Calu3 (cell line): ENCODE measurements at regions of chr3 and their contacts with region 1.

Region 1: GRCh38 chr3:135918580-135918962 is 47.0 kb upstream of the PPP2R3A start:
- DNase-seq: no peak
- H3K4me3 Mint-ChIP-seq: no peak overlapping the region
- H3K27ac Mint-ChIP-seq: peak overlapping the region; percentile 40
- H3K4me1 Mint-ChIP-seq: peaks cover 36% of the 10 kb centered on the region
- H3K27me3 Mint-ChIP-seq: no peaks in the 10 kb centered on the region
- CTCF ChIP-seq: peak; percentile 83

Region 2: GRCh38 chr3:135860761-135861160 is 57.8 kb before region 1 on chr3:
- CTCF ChIA-PET with region 1: no interaction called
- intact Hi-C with region 1: no loop called
- DNase-seq: no peak
- H3K4me3 Mint-ChIP-seq: no peak overlapping the region
- H3K27ac Mint-ChIP-seq: no peak overlapping the region
- H3K4me1 Mint-ChIP-seq: no peaks in the 10 kb centered on the region
- H3K27me3 Mint-ChIP-seq: peaks cover 13% of the 10 kb centered on the region
- CTCF ChIP-seq: no peak

Region 3: GRCh38 chr3:135965506-135966270 is 47.1 kb after region 1 on chr3 and contains the start of gene PPP2R3A:
- CTCF ChIA-PET with region 1: interaction called, 38 read pairs
- intact Hi-C with region 1: loop called (anchors 1 kb)
- DNase-seq: peak; percentile 96
- H3K4me3 Mint-ChIP-seq: peak within 1 kb of the TSS; percentile 76
- H3K27ac Mint-ChIP-seq: peak within 1 kb of the TSS; percentile 73
- H3K4me1 Mint-ChIP-seq: peaks cover 39% of the 10 kb centered on the region
- H3K27me3 Mint-ChIP-seq: no peaks in the 10 kb centered on the region
- CTCF ChIP-seq: no peak
- total RNA-seq, gene PPP2R3A: 45.6 and 64.8 TPM in 2 replicates

Region 4: GRCh38 chr3:135992072-135992471 is 73.5 kb after region 1 on chr3:
- CTCF ChIA-PET with region 1: no interaction called
- intact Hi-C with region 1: loop called (anchors 1 kb)
- DNase-seq: no peak
- H3K4me3 Mint-ChIP-seq: no peak overlapping the region
- H3K27ac Mint-ChIP-seq: peak overlapping the region; percentile 85
- H3K4me1 Mint-ChIP-seq: peaks cover 37% of the 10 kb centered on the region
- H3K27me3 Mint-ChIP-seq: no peaks in the 10 kb centered on the region
- CTCF ChIP-seq: no peak

Region 5: DNA sequence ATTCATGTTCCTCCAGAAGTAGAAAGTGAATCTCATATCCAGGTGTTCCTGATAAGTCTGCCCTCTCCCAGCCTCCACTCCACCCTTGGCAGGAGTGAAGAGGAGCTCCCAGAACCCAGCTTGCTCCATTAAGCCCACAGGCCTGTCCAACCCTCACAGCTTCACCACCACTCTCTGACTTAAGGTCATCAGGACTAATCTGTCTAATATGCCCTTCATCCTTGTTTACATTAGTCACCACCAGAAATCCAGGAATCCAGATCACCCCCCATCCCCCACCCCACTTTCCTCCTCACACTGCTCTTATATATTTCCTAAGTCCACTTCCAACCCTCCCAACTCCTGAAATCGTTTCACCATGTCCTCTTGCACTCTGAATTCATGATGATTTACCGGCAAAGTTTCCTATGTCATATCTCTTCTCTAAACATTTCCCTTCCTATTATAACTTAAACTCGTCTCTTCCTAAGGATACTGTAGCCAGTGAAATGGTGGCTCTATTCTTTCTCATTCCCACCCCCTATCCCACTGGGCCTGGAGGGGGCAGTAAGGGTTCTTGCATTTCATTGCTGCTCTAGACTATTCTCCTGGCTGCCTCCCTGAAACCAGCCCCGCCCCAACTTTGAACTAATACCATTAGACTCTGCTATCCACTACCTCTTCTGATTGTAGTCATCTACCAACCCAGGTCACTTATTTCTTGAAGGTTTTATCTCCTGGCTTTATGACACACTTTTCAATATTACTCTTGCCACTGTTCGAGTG is 90.3 kb after region 1 on chr3:
- CTCF ChIA-PET with region 1: interaction called, 3 read pairs
- intact Hi-C with region 1: loop called (anchors 1 kb)
- DNase-seq: no peak
- H3K4me3 Mint-ChIP-seq: no peak overlapping the region
- H3K27ac Mint-ChIP-seq: peak overlapping the region; percentile 3
- H3K4me1 Mint-ChIP-seq: peaks cover 42% of the 10 kb centered on the region
- H3K27me3 Mint-ChIP-seq: no peaks in the 10 kb centered on the region
- CTCF ChIP-seq: no peak

Region 6: GRCh38 chr3:136042608-136043221 is 124.1 kb after region 1 on chr3:
- CTCF ChIA-PET with region 1: interaction called, 59 read pairs
- intact Hi-C with region 1: loop called (anchors 1 kb)
- DNase-seq: peak; percentile 34
- H3K4me3 Mint-ChIP-seq: no peak overlapping the region
- H3K27ac Mint-ChIP-seq: no peak overlapping the region
- H3K4me1 Mint-ChIP-seq: peaks cover 13% of the 10 kb centered on the region
- H3K27me3 Mint-ChIP-seq: no peaks in the 10 kb centered on the region
- CTCF ChIP-seq: peak; percentile 55